Endothelial cell of umbilical vein (primary cell): ENCODE measurements at regions of chr12 and their contacts with region 1.

Region 1: GRCh38 chr12:96445691-96446583 is 43.4 kb upstream of the CFAP54 start:
- DNase-seq: peak; percentile 100
- H3K4me3 ChIP-seq: no peak overlapping the region
- H3K27ac ChIP-seq: peak overlapping the region; percentile 99
- H3K4me1 ChIP-seq: peaks cover 51% of the 10 kb centered on the region
- H3K27me3 ChIP-seq: no peaks in the 10 kb centered on the region
- CTCF ChIP-seq: no peak
- POLR2A ChIP-seq: peak; percentile 88

Region 2: GRCh38 chr12:96327346-96327745 is 118.6 kb before region 1 on chr12:
- CTCF ChIA-PET with region 1: no interaction called
- POLR2A ChIA-PET with region 1: no interaction called
- dilution Hi-C with region 1: no loop called
- intact Hi-C with region 1: no loop called
- DNase-seq: no peak
- H3K4me3 ChIP-seq: no peak overlapping the region
- H3K27ac ChIP-seq: no peak overlapping the region
- H3K4me1 ChIP-seq: no peaks in the 10 kb centered on the region
- H3K27me3 ChIP-seq: no peaks in the 10 kb centered on the region
- CTCF ChIP-seq: no peak
- POLR2A ChIP-seq: no peak

Region 3: DNA sequence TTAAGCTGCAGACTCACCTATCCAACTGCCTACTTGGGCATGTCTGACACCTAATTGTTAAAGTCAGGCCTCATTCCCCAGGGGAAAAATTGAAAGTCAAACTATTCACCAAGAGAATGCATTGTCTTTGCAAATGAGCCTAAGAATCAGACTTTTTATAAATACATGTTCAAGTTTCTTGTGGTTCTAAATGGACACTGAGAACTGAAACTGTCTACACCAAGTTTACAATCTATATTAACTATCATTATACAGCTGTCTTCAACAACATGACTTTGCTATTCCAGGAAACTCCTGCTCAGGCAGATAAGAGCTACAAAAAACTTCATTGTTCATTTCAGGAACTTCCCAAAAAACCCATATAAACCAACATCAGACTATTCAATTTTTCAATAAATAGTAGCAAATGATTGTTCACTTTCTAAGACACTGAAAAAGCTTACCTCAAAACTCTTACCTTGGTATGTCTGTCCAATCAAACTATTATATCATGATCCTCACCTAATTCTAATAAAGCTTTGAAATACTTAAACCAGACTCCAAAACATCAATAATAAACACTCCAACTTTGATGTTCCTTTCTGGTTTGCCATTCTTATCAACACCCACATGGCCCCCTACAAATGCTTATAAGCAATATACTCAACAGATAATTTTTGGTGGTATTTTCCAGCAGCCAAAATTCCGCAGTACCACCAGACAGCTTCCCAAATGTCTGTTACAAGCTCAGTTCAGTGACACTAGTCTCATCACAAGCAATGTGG is 69.9 kb before region 1 on chr12:
- CTCF ChIA-PET with region 1: no interaction called
- POLR2A ChIA-PET with region 1: interaction called, 11 read pairs
- dilution Hi-C with region 1: no loop called
- intact Hi-C with region 1: no loop called
- DNase-seq: peak; percentile 89
- H3K4me3 ChIP-seq: no peak overlapping the region
- H3K27ac ChIP-seq: peak overlapping the region; percentile 69
- H3K4me1 ChIP-seq: peaks cover 86% of the 10 kb centered on the region
- H3K27me3 ChIP-seq: no peaks in the 10 kb centered on the region
- CTCF ChIP-seq: no peak
- POLR2A ChIP-seq: peak; percentile 58

Region 4: GRCh38 chr12:96416033-96416801 is 29.7 kb before region 1 on chr12:
- CTCF ChIA-PET with region 1: interaction called, 11 read pairs
- POLR2A ChIA-PET with region 1: interaction called, 37 read pairs
- dilution Hi-C with region 1: no loop called
- intact Hi-C with region 1: loop called (anchors 1 kb)
- DNase-seq: peak; percentile 33
- H3K4me3 ChIP-seq: no peak overlapping the region
- H3K27ac ChIP-seq: no peak overlapping the region
- H3K4me1 ChIP-seq: peaks cover 43% of the 10 kb centered on the region
- H3K27me3 ChIP-seq: no peaks in the 10 kb centered on the region
- CTCF ChIP-seq: no peak
- POLR2A ChIP-seq: no peak

Region 5: GRCh38 chr12:96434107-96434506 is 11.8 kb before region 1 on chr12:
- CTCF ChIA-PET with region 1: interaction called, 12 read pairs
- POLR2A ChIA-PET with region 1: interaction called, 31 read pairs
- dilution Hi-C with region 1: no loop called
- intact Hi-C with region 1: no loop called
- DNase-seq: peak; percentile 47
- H3K4me3 ChIP-seq: no peak overlapping the region
- H3K27ac ChIP-seq: no peak overlapping the region
- H3K4me1 ChIP-seq: peaks cover 30% of the 10 kb centered on the region
- H3K27me3 ChIP-seq: no peaks in the 10 kb centered on the region
- CTCF ChIP-seq: no peak
- POLR2A ChIP-seq: no peak

Region 6: DNA sequence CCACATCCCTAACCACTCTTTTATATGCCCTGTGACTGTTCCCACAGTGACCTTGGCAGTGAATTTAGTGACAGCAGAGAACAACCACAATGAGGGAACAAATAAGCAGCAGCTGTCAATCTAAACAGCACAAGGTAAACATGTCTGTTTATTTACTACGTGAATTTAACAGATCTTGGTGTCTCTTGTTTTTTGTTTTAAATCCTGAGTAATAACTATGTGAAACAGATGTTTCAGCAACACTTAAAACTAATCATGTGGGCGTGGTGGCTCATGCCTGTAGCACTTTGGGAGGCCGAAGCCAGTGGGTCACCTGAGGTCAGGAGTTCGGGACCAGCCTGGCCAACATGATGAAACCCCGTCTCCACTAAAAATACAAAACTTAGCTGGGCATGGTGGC is 26.4 kb after region 1 on chr12:
- CTCF ChIA-PET with region 1: no interaction called
- POLR2A ChIA-PET with region 1: no interaction called
- dilution Hi-C with region 1: no loop called
- intact Hi-C with region 1: no loop called
- DNase-seq: no peak
- H3K4me3 ChIP-seq: no peak overlapping the region
- H3K27ac ChIP-seq: no peak overlapping the region
- H3K4me1 ChIP-seq: peaks cover 26% of the 10 kb centered on the region
- H3K27me3 ChIP-seq: no peaks in the 10 kb centered on the region
- CTCF ChIP-seq: no peak
- POLR2A ChIP-seq: no peak

Region 7: DNA sequence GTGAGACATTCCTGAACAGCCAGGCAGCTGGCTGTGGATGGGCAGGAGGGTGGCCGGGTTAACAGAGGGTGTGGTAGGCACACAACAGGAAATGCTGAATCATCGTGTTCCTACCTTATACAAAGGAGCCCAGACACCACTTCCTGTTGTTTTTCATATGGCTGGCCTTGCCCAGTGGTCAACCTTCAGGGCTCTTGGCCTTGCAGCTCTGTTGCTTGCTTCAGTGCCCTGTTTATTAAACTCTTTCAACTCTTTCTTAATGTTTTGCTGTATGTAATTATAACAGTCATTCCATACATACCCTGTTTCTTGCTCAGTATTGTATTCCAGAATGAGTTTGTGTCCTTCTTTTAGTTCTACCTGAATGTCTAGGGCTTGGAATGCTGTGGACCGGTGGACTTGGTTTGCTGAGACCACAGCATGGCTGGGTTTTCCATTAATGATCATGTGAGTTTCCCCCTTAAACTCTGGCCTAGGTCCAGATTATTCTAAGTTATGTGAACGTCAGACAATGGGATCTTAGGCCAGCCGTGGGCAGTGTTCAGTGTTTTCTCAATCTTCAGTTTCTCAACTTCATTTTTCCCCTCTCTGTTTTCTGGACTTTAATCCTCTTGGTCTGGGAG is 55.3 kb after region 1 on chr12:
- CTCF ChIA-PET with region 1: interaction called, 25 read pairs
- POLR2A ChIA-PET with region 1: interaction called, 8 read pairs
- dilution Hi-C with region 1: no loop called
- intact Hi-C with region 1: loop called (anchors 1 kb)
- DNase-seq: peak; percentile 94
- H3K4me3 ChIP-seq: peak overlapping the region in 1 of 3 experiments; percentile 9
- H3K27ac ChIP-seq: peak overlapping the region; percentile 99
- H3K4me1 ChIP-seq: peaks cover 46% of the 10 kb centered on the region
- H3K27me3 ChIP-seq: no peaks in the 10 kb centered on the region
- CTCF ChIP-seq: no peak
- POLR2A ChIP-seq: peak; percentile 91

Region 8: DNA sequence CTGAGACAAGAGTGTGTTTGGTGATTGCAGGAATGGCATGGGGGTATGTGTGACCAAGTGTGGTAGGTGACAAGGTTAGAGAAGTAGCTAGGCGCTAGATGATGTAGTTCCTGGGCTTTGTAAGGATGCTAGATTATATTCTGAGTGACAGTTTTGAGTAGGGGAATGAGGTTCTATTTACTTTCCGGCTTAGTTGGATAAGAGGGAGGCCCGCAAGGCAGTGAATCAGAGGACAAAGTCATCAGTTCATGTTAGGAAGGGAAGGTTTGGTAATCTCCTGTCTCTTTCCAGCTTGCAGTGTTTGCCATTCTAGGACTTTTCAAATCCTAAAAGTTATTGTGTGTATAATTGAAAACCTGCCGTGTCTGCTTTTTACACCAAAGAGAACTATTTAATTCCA is 88.4 kb after region 1 on chr12:
- CTCF ChIA-PET with region 1: no interaction called
- POLR2A ChIA-PET with region 1: no interaction called
- dilution Hi-C with region 1: no loop called
- intact Hi-C with region 1: no loop called
- DNase-seq: peak; percentile 22
- H3K4me3 ChIP-seq: no peak overlapping the region
- H3K27ac ChIP-seq: no peak overlapping the region
- H3K4me1 ChIP-seq: peaks cover 5% of the 10 kb centered on the region
- H3K27me3 ChIP-seq: no peaks in the 10 kb centered on the region
- CTCF ChIP-seq: no peak
- POLR2A ChIP-seq: no peak